GM13976 (cell line): ENCODE measurements at regions of chr19 and their contacts with region 1.

Region 1: GRCh38 chr19:6862673-6863078 is 24.7 kb upstream of the ADGRE1 start:
- DNase-seq: peak; percentile 89
- CTCF ChIP-seq: peak; percentile 95

Region 2: GRCh38 chr19:6516659-6517291 is 345.9 kb before region 1 on chr19:
- in situ Hi-C with region 1: loop called (anchors 25 kb)
- DNase-seq: peak; percentile 88
- CTCF ChIP-seq: peak; percentile 99

Region 3: GRCh38 chr19:6632002-6632621 is 230.6 kb before region 1 on chr19:
- in situ Hi-C with region 1: loop called (anchors 10 kb)
- DNase-seq: peak; percentile 71
- CTCF ChIP-seq: peak; percentile 62

Region 4: DNA sequence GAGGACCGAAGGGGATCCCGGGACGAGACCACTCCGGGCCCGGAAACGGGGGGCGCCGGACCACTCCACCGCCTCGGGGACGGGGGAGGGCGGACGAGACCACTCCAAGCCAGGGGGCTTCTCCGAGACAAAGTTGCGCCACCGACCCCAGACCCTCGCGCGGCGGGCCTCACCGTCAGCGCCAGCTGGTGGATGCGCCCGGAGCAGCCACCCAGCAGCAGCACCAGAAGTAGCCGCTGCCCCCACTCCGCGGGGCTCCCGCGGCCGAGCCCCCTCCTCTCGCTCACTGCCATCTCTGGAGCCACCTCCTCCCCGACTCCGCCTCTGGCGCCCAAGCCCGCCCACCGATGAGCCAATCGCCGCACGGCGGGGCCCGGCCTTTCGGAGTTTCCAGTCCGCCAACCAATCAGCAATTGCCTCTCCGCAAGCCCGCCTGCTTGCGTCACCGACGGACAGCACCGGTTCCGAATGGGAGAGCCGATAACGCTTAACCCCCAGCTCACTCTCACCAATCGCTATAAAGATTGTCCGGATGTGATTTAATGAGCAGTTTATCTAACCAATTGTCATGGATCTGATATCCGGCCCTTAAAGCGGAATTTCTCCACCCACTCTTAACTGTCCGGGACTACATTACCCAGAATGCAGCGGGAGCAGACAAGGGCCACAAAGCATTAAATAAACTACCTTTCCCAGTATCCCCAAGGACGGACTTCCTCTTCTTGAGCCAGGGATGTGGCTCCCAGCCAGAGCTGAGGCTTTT is 125.2 kb before region 1 on chr19 and contains the start of gene GPR108:
- in situ Hi-C with region 1: loop called (anchors 10 kb)
- DNase-seq: peak; percentile 97
- CTCF ChIP-seq: no peak

Region 5: DNA sequence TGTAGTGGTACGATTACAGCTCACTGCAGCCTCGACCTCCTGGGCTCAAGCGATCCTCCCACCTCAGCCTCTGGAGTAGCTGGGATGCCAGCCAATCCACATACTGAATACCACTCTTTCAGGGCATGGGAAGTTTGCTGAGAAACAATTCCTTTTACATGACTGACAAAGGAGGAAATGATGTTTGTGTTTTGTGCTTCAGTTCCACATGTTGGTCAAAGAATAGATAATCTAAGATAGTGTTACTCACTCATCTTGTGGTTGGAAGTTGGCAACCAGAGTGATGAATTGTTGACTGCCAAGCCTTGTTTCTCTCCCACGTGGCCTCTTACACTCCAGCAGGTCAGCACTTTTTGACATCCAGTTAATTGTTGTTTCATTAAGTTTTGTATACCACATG is 151.0 kb after region 1 on chr19:
- in situ Hi-C with region 1: no loop called
- DNase-seq: peak; percentile 45
- CTCF ChIP-seq: no peak